SK-N-SH (cell line): ENCODE measurements at regions of chr7 and their contacts with region 1.

Region 1: DNA sequence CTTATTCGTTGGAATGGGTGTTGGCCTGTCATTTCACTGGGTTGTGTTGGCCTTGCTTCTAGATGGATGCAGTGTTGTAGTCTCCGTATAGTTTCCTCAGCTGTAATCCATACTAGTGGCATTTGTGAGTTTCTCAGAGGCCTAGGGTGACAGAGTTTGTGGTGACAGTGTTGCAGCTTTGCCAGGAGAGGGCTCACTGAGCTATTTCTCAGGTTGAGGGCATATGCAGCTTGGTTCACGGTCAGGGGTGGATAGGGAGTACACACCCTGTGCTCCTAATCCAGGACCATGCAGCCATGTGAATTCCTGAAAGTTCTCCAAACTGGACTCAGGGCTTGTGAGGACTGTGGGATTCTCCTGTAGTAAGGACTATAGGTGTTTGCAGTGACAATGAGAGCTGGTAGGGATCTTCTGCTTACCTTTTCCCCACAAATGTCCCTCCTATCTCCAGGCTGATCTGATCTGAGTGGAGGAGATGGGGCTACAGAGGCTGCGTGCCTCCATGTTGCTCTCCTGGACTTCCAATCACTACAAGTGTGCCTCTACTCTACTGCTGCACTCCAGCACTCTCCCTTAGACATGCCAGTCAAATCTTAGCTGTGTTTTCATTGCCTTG is 229.0 kb downstream of the STK31 start:
- DNase-seq: peak; percentile 51
- H3K4me3 ChIP-seq: no peak overlapping the region
- H3K27ac ChIP-seq: no peak overlapping the region
- H3K4me1 ChIP-seq: no peaks in the 10 kb centered on the region; a peak in 1 of 4 replicates
- H3K27me3 ChIP-seq: no peaks in the 10 kb centered on the region
- CTCF ChIP-seq: peak; percentile 50; the same call in 1 of the 2 replicates
- EP300 ChIP-seq: no peak
- RAD21 ChIP-seq: peak; percentile 78

Region 2: DNA sequence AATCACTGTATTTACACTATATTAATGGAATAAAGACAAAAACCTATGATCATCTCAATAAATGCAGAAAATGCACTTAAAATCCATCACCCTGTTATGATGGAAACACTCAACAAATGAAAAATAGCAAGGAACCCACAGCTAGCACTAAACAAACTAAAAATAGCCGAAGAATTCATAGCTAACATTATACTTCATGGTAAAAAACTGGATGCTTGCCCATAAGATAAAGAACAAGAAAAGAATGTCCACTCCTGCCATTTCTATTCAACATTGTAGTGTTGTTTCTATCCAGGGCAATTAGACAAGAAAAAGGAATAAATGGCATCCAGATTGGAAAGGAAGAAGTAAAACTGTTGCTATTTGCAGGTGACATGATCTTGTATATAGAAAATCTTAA is 86.9 kb before region 1 on chr7:
- CTCF ChIA-PET with region 1: no interaction called
- POLR2A ChIA-PET with region 1: no interaction called
- DNase-seq: no peak
- H3K4me3 ChIP-seq: no peak overlapping the region
- H3K27ac ChIP-seq: no peak overlapping the region
- H3K4me1 ChIP-seq: peaks cover 0 to 4% of the 10 kb centered on the region in 2 experiments; a peak in 1 of 4 replicates
- H3K27me3 ChIP-seq: no peaks in the 10 kb centered on the region
- CTCF ChIP-seq: no peak
- EP300 ChIP-seq: peak in 1 of 2 experiments; percentile 52; a peak in 1 of 4 replicates
- RAD21 ChIP-seq: no peak

Region 3: DNA sequence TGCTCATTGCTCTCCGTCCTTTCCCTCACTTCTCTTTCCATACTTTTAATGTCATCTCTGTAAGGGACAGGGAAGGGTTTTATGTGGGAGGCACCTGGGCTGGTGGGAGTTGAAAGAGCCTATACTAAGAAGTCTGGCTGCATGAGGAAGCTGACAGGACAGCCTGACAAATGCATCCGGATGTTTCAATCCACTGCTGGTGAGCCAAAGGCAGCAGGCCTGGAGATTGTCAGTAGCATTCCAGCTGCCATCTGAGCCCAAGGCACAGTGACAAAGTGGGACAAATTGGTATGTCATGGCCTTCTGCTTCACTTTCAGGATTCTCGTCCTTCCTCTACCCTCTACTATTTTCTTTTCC is 10.6 kb before region 1 on chr7:
- CTCF ChIA-PET with region 1: interaction called, 17 read pairs
- POLR2A ChIA-PET with region 1: no interaction called
- DNase-seq: peak; percentile 74
- H3K4me3 ChIP-seq: no peak overlapping the region
- H3K27ac ChIP-seq: peak overlapping the region in 1 of 2 experiments; percentile 98; a peak in 2 of 4 replicates
- H3K4me1 ChIP-seq: peaks cover 0 to 62% of the 10 kb centered on the region in 2 experiments; a peak in 2 of 4 replicates
- H3K27me3 ChIP-seq: no peaks in the 10 kb centered on the region
- CTCF ChIP-seq: no peak
- EP300 ChIP-seq: peak in 1 of 2 experiments; percentile 99; a peak in 2 of 4 replicates
- RAD21 ChIP-seq: no peak

Region 4: DNA sequence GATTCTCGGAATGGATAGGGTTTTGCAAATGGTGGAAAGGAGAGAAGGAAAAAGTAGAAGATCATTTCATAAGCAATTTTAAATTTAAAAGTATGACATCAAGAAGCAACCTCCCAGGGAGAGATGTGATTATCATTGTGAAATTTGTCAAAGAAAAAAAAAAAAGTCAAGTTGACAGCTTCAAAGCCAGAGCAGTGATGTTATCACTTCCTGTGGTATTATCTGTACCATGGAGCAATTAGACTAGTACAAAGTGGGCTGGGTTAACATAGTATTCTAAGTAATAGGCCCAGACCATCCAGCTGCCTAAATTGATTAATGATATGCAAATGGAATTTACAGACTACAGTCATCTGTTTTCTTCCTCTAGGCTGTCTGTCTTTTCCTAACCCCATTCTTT is 260.9 kb after region 1 on chr7:
- CTCF ChIA-PET with region 1: no interaction called
- POLR2A ChIA-PET with region 1: no interaction called
- DNase-seq: peak; percentile 56
- H3K4me3 ChIP-seq: no peak overlapping the region; a peak in 1 of 4 replicates
- H3K27ac ChIP-seq: peak overlapping the region in 1 of 2 experiments; percentile 95; a peak in 2 of 4 replicates
- H3K4me1 ChIP-seq: peaks cover 0 to 44% of the 10 kb centered on the region in 2 experiments; a peak in 3 of 4 replicates
- H3K27me3 ChIP-seq: no peaks in the 10 kb centered on the region
- CTCF ChIP-seq: no peak
- EP300 ChIP-seq: peak; percentile 40 to 98; a peak in 3 of 4 replicates
- RAD21 ChIP-seq: peak; percentile 42

Region 5: DNA sequence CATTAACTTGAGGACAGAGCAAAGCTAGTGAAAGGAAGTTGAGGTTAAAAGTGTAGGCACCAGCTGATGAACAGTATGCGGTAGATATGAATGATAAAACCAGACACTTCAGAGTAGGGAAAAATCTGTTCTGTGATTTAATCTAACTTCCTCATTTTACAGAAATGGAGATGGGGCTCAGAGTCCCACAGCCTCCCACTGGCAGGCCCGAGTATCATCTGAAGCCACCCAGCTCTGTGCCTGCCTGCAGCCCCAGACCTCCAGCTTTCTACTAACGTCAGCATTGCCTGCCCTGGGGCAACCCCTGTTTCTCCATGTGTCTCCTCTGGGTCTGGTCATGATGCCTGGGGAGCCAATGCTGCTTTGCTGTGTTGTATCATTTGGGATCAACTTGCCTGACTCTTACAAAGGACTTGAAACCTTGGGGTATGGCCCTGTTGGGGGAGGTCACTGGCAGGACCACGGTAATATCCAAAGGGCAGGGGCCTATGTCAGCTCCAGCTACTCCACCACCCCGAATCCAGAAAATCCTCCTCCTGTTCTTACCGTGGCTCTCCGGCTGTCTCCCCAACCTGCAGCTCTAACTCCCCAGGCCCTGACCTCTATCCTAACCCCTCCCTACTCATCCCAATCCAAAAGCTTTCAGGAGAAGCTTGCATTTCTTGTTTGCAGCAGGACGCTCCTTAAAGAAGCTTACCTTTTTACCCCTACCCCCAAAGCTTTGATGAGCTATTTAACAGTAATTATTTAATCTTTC is 288.7 kb after region 1 on chr7:
- CTCF ChIA-PET with region 1: interaction called, 11 read pairs
- POLR2A ChIA-PET with region 1: no interaction called
- DNase-seq: peak; percentile 75
- H3K4me3 ChIP-seq: no peak overlapping the region
- H3K27ac ChIP-seq: peak overlapping the region in 1 of 2 experiments; percentile 97; a peak in 2 of 4 replicates
- H3K4me1 ChIP-seq: peaks cover 0 to 36% of the 10 kb centered on the region in 2 experiments; a peak in 2 of 4 replicates
- H3K27me3 ChIP-seq: no peaks in the 10 kb centered on the region
- CTCF ChIP-seq: no peak
- EP300 ChIP-seq: peak in 1 of 2 experiments; percentile 89; a peak in 2 of 4 replicates
- RAD21 ChIP-seq: peak; percentile 49